ENCODE measurements at regions of chr2 and their contacts with region 1.

Region 1: DNA sequence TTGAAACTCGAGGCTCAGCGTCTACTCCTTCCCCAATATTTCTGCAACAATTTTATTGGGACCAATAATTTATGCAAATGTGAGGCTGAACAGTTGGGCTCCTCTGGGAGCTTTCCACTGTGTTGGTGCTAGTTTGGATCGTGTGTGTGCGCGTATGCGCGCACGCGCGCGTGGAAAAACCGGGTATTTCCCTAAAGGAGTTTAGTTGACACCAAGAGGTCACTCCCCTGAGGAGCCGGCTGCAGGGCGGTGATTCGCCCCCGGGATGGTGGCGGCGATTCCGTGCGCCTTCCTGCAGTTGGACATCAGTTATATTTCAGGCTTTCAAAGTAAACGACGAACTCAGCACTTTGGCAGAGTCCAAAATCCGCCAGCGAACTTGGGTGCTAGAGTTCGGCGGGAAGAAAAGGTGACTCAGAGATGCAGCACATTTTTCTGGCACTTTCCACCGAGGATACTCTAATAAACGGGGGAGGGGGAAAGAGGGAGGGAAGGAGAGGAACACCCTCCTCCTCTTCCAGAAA is 186.5 kb upstream of the FANCL start:
- DNase-seq: peak; percentile 43 to 94 (median 64)

Region 2: DNA sequence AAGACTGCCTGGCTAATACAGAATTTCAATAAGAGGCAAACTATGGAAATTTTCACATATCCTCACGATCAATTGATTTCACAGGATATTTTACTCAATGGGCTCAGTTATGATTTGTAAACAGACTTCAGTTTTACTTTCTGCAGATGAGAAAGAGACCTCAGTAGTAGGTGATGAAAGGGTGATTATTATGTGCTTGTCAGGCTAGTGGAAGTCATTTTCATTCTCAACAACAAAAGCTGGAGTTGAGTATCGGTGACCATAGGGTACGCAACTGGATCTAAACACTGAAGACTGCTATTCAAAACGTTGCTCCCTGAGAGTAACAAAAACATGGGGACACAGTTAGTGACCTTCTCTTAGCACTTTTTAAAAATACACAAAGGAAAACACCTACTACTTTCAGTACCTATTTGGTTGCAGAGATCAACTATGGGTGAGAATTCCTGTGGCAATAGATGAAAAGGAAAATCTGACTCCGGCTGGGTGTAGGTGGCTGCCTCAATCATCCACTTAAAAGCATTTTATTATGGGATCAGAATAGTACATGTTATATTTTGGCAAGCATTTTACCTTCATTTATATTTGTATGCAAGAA is 507.2 kb before region 1 on chr2:
- intact Hi-C with region 1: no loop called
- DNase-seq: no peak

Region 3: GRCh38 chr2:58240670-58241545 is 186.7 kb before region 1 on chr2 and contains the start of gene FANCL:
- intact Hi-C with region 1: loop called (anchors 10 kb)
- DNase-seq: peak; percentile 84 to 98 (median 91)

Measured in posterior cingulate gyrus (tissue), 11 donors.